ENCODE measurements at regions of chr18 and their contacts with region 1.

Region 1: DNA sequence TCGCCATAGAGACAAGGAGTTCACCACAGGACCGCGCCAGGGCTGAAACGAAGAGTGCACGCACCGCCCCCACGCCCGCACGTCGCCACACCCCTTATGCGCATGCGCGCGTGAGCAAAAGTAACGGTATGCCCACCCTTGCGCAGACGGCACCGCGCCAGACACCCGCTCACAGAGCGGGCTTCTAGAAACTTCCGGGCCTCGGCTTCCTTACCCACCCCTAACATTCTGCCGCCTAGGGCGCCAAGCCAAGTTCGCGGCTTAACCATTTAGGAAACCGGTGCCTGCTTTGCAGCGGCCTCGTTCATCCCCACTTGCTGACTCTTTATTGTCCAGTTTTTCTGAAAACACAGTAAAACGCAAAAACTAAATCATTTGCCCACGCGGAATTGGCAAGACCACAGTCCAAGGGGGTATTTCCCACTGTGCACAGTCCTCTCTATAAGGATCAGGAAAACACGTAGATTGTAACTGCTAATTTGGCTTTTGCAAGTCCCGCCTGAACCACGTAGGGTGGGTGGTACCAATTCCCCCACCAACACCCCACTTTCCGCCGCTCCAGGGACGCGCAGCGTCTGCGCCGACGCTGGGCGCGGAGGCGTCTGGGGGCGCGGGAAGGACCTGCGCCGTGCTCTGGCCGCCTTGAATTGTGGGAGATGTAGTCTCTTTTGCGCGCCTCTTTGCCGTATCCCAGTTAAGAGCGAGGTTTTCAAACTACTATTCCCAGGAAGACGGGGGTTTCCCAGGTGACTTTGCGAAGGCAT is at the starts of genes FBXO15 and TIMM21:
- DNase-seq: peak; percentile 94 to 97
- ATAC-seq: peak; percentile 97 to 98
- H3K4me3 ChIP-seq: peak within 1 kb of the TSS; percentile 63 to 95 (median 81)
- H3K27ac ChIP-seq: peak within 1 kb of the TSS; percentile 89 to 94 (median 92)
- H3K4me1 ChIP-seq: peaks cover 30 to 45% of the 10 kb centered on the region in 2 donors
- H3K27me3 ChIP-seq: no peaks in the 10 kb centered on the region
- CTCF ChIP-seq: no peak
- POLR2A ChIP-seq: peak; percentile 79 to 85
- total RNA-seq, gene FBXO15: not detected
- total RNA-seq, gene TIMM21: 40.0 to 108 (median 75.8) TPM

Region 2: DNA sequence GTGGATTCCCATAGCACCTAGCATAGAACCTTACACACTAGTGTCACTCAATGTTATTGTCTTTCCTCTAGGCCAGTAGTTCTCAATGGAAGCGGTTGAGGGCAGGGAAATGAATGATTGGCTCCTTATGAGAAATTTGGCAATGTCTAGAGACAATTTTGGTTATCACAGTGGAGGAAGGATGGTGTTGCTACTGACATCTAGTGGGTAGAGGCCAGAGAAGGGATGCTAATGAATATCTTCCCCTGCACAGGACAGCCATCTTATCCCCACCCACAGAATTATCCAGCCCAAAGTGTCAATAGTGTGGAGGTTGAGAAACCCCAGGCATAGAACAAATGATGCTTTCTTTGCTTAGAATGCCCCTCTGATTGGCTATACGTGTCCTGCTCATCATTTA is 183.4 kb after region 1 on chr18:
- in situ Hi-C with region 1: no loop called
- intact Hi-C with region 1: no loop called
- DNase-seq: no peak
- ATAC-seq: no peak
- H3K4me3 ChIP-seq: no peak overlapping the region
- H3K27ac ChIP-seq: no peak overlapping the region
- H3K4me1 ChIP-seq: no peaks in the 10 kb centered on the region
- H3K27me3 ChIP-seq: no peaks in the 10 kb centered on the region
- CTCF ChIP-seq: no peak
- POLR2A ChIP-seq: no peak

Region 3: GRCh38 chr18:74597662-74598349 is 449.8 kb after region 1 on chr18 and contains the start of gene ZNF407:
- in situ Hi-C with region 1: no loop called
- intact Hi-C with region 1: loop called (anchors 2 kb)
- DNase-seq: peak; percentile 80 to 81
- ATAC-seq: peak; percentile 93
- H3K4me3 ChIP-seq: peak within 1 kb of the TSS; percentile 81 to 97 (median 94)
- H3K27ac ChIP-seq: peak within 1 kb of the TSS; percentile 91 to 98 (median 94)
- H3K4me1 ChIP-seq: peaks cover 39 to 42% of the 10 kb centered on the region in 2 donors
- H3K27me3 ChIP-seq: no peaks in the 10 kb centered on the region
- CTCF ChIP-seq: peak in 1 of 5 experiments; percentile 37
- POLR2A ChIP-seq: peak in 1 of 2 donors; percentile 3
- total RNA-seq, gene ZNF407: 5.9 to 11.4 (median 9.2) TPM

Measured in gastrocnemius medialis (tissue), 4 donors.